Activated CD4-positive, alpha-beta T cell treated with anti-CD3 and anti-CD28 coated beads for 36 hours (primary cell): ENCODE measurements at regions of chr15 and their contacts with region 1.

Region 1: DNA sequence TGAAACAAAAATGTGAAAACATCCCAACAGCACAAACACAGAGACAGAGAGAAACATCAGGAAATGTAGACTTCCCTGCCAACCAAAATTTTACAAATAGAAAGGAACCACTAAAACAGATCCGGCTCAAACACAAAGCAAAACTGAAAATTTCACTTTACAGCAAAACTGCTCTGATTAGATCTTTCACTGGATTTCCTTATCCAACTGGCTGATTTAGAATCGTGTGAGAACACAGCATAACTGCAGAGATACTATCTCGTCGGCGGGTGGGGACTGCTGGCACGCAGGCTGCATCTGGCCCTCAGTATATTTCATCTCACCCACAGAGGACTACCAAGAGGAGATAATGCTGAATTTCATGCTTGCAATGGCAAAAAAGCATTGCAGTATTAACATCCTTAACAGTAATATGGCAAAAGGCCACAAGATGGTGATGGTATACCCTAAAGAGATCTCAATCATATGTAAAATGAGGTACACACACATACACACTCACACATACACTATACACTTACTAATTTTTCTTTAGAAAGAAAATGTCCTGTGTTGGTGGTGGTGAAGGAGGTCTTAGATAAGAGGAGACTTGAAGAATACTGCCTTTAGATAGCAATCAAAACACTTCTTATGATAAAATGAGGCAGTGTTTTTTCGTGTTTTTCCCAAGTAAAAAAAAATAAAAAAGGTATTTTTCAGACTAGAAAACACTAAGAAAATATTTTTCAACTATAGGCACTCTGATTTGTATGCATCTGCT is 10.6 kb upstream of the LEO1 start:
- DNase-seq: peak; percentile 77
- ATAC-seq: peak; percentile 96
- H3K4me3 Mint-ChIP-seq: peak overlapping the region; percentile 63
- H3K27ac Mint-ChIP-seq: peak overlapping the region; percentile 78
- H3K4me1 Mint-ChIP-seq: peaks cover 16% of the 10 kb centered on the region
- H3K27me3 Mint-ChIP-seq: no peaks in the 10 kb centered on the region

Region 2: DNA sequence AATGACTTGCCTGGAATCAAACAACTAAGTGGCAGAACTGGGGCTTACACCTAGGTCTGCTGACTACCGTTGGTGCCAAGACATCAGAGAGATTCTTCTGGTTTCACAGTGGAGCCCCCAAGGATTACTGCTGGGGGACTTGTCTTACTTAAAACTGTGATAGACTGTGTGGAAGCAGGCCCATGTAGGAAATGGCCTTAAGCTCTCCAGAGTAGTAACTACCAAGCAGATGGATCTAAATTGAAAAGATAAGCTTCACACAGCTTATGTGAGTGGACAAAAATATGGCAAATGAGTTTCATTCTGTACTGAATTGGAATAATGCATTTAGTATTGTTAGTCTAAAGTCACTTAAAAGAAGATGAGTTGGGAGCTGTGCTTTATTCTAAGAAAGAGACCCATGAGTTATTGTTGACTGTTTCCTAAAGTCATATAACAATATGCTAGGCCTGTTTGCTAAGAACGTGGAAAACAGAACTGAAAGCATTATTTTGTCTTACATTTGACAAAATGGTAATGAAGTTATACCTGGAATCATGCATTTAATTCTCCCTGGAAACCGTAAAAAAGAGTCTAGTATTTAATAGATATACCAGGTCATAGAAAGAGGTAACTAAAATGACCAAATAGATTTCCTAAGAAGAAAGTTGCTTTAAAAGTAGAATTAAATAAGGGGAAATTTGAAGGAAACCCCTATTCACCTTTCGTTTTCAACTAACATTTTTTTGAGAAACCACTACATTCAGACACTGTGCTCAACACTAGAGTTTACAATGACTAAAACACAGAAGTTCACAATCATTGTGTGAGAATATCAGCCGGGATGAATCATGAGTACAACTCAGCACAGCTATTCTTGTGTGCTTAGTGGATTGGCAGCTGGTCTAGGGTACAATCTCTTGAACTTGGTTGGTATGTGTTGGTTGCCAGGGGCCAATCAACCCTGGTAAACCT is 23.8 kb after region 1 on chr15:
- CTCF ChIA-PET with region 1: interaction called, 5 read pairs
- POLR2A ChIA-PET with region 1: no interaction called
- intact Hi-C with region 1: loop called (anchors 1 kb)
- DNase-seq: peak; percentile 54
- ATAC-seq: peak; percentile 90
- H3K4me3 Mint-ChIP-seq: peak overlapping the region; percentile 6
- H3K27ac Mint-ChIP-seq: peak overlapping the region; percentile 56
- H3K4me1 Mint-ChIP-seq: peaks cover 64% of the 10 kb centered on the region
- H3K27me3 Mint-ChIP-seq: no peaks in the 10 kb centered on the region

Region 3: DNA sequence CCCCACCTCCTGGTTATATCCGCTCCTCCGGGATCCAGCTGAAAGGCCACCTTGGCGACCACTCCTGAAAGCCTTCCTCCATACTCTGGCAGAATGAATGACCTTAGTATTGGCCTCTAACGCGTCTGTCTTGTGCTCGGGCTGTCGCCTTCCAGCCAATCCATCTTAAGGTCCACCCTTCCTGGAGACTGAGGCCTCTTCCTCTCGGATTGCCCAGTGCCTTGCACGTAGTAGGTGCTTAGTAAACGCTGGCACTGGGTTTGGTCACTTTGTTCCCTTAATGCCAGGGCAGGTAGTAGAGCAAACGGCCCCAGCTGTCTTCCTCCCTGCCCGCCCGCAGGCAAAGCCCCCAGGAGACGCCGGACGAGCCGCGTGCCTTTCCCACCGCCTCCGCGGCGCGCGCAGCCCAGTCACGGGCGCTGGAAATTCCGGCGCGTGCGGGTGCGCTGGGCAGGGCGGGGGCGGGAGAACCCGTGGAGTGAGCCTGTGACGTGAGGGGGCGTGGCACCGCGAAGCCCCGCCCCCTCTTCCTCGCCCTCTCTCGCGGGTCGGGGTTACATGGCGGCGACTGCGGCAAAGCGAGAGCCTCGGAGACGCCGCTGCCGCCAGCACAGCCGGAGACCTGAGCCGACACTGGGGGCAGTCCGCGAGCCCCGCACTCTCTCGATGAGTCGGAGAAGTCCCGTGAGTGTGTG is 36.6 kb after region 1 on chr15 and contains the start of gene MAPK6:
- CTCF ChIA-PET with region 1: interaction called, 6 read pairs
- POLR2A ChIA-PET with region 1: interaction called, 4 read pairs
- intact Hi-C with region 1: loop called in 1 of 2 experiments (anchors 1 kb)
- DNase-seq: peak; percentile 97
- ATAC-seq: peak; percentile 76
- H3K4me3 Mint-ChIP-seq: peak within 1 kb of the TSS; percentile 86
- H3K27ac Mint-ChIP-seq: peak within 1 kb of the TSS; percentile 96
- H3K4me1 Mint-ChIP-seq: peaks cover 38% of the 10 kb centered on the region
- H3K27me3 Mint-ChIP-seq: peaks cover 5% of the 10 kb centered on the region
- total RNA-seq, gene MAPK6: 27.3 to 28.1 TPM

Region 4: DNA sequence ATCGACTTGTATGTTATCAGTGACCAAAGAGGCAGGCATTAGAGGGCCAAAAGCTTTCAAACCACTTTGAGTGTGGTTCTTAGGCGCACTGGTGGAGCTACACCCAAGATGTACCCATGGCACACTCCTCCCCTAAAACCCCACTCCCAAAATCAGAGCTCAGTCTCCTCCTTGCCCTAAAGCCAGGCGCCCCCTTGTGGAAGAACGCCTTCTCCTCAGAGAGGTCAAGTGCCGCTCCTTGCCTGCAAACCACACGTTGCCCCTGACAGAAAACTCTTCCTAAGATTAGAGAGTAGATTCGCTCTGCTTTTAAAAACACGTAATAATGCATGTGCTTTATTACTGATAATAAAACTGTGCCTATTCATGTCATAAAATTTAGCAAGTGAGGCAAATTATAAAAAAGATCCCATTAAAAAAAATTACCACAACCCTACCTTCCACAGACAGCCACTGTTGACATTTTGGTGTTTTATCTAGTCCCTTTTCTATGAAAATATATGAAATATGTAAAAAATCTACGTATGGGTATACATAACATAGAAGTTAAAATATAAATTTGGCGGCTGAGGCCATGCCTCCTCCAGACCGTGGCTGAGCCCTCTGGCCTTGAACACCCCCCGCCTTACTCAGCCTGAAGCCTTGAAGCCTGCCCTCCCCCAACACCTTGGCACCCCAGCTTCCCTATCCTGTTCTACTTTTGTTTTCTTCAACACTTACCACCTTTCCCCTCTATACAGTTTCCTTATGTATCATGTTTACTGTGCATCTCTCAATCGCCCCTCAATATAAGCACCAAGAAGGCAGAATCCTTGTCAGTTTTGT is 96.9 kb after region 1 on chr15:
- CTCF ChIA-PET with region 1: interaction called, 24 read pairs
- POLR2A ChIA-PET with region 1: no interaction called
- intact Hi-C with region 1: loop called (anchors 1 kb)
- DNase-seq: peak; percentile 93
- ATAC-seq: peak; percentile 79
- H3K4me3 Mint-ChIP-seq: no peak overlapping the region
- H3K27ac Mint-ChIP-seq: no peak overlapping the region
- H3K4me1 Mint-ChIP-seq: peaks cover 15% of the 10 kb centered on the region
- H3K27me3 Mint-ChIP-seq: no peaks in the 10 kb centered on the region

Region 5: DNA sequence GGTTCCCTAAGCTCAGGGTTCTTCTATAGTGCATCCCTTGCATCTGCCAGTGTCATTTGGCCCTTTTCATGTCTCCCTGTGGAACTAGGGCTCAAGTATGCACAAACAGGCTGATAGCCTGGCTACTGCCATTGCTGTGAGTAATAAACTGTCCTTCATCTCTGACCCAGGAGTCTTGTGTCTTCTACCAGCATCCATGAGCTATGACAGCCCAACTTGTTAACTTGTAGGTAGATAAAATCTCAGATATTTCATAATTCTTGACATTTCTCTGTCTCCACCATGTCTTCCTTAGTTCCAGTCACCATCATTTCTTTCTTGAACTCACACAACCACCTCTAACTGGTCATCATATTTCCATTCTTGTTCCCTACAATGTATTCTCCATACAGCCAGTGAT is 149.9 kb after region 1 on chr15:
- CTCF ChIA-PET with region 1: no interaction called
- POLR2A ChIA-PET with region 1: no interaction called
- intact Hi-C with region 1: no loop called
- DNase-seq: no peak
- ATAC-seq: no peak
- H3K4me3 Mint-ChIP-seq: no peak overlapping the region
- H3K27ac Mint-ChIP-seq: no peak overlapping the region
- H3K4me1 Mint-ChIP-seq: peaks cover 16% of the 10 kb centered on the region
- H3K27me3 Mint-ChIP-seq: no peaks in the 10 kb centered on the region

Region 6: GRCh38 chr15:52227456-52227855 is 245.3 kb after region 1 on chr15:
- CTCF ChIA-PET with region 1: interaction called, 12 read pairs
- POLR2A ChIA-PET with region 1: no interaction called
- intact Hi-C with region 1: loop called (anchors 1 to 2 kb)
- DNase-seq: peak; percentile 82
- ATAC-seq: peak; percentile 95
- H3K4me3 Mint-ChIP-seq: no peak overlapping the region
- H3K27ac Mint-ChIP-seq: no peak overlapping the region
- H3K4me1 Mint-ChIP-seq: peaks cover 13% of the 10 kb centered on the region
- H3K27me3 Mint-ChIP-seq: no peaks in the 10 kb centered on the region